ENCODE measurements at regions of chr1 and their contacts with region 1.

Region 1: DNA sequence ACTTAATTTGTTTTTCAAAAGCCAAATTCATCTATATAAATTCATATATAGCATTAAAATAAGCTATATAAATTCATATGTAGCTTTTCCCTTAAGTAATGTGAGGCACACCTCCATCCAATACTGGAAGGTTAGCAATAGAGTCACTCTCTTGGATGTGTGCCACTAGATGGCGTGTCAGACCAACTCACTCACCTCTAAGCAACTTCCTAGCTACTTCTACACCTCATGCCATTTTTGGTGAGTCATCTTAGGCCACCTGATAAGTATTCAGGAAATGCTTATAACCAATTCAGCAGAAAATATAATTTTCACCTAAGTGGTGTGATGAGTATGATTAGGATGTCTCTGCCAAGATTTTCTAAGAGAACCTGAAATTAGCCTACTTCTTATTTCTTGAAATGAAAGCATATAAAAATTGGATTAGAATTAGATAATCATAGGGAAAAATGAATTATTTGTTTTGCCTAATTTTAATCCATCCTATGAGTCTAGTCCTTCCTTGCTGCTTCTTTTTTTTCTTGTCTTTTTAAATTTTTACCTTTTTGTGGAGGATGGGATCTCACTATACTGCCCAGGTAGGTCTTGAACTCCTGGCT is 34.4 kb upstream of the TADA1 start:
- H3K4me3 ChIP-seq: no peak overlapping the region
- H3K27ac ChIP-seq: no peak overlapping the region
- H3K4me1 ChIP-seq: no peaks in the 10 kb centered on the region
- CTCF ChIP-seq: peak; percentile 48; the same call in 1 of the 2 replicates

Region 2: DNA sequence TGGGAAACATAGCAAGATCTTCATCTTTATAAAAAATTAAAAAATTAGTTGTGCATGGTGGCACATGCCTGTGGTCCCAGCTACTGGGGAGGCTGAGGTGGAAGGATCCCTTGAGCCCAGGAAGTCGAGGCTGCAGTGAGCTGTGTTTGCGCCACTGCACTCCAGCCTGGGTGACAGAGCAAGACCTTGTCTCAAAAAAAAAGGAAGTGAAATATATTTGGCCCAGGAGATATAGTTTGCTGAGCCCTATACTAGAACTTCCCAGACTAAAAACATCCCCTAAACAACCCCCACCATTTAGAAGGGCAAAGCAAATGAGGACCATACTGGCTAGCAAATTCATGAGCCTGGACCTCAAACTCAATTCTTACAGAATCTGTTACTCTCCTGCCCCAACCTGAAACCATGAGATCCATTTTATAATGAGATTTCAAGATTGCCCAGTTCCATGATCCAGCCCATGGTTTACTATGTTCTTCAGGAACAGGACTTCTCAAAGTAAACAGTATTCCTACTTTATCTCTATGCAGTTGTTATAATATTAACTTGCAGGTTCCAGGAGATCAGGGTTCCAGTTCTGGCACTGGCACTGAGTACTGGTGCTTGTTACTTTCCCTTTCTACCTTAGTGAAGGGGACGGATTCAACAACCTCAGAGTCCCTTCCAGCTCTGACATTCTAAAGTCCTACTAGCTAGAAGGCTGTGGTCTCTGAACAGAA is 14.5 kb after region 1 on chr1:
- CTCF ChIA-PET with region 1: interaction called, 16 read pairs
- POLR2A ChIA-PET with region 1: no interaction called
- H3K4me3 ChIP-seq: no peak overlapping the region
- H3K27ac ChIP-seq: no peak overlapping the region
- H3K4me1 ChIP-seq: no peaks in the 10 kb centered on the region
- CTCF ChIP-seq: no peak

Region 3: DNA sequence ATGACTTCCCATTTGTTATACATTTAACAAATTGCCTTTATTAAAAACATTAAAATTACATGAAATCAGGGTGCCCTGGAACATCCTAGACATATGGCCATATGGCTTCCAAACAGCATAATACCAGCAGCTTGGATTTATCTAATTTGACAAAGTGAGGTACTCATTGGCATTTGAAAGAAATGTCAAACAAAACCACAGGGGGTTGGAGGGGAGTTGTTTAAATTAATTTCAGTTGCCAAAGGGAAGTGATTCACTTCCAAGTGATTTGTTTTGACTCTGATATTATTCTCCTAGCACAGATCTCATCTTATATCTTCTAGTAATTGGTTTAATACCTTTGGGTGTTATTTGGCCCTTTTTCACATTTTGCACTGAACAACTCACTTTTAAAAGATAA is 285.7 kb after region 1 on chr1:
- CTCF ChIA-PET with region 1: no interaction called
- POLR2A ChIA-PET with region 1: no interaction called
- H3K4me3 ChIP-seq: no peak overlapping the region
- H3K27ac ChIP-seq: no peak overlapping the region
- H3K4me1 ChIP-seq: no peaks in the 10 kb centered on the region
- CTCF ChIP-seq: no peak

Region 4: GRCh38 chr1:167371030-167371429 is 460.5 kb after region 1 on chr1:
- CTCF ChIA-PET with region 1: no interaction called
- POLR2A ChIA-PET with region 1: no interaction called
- H3K4me3 ChIP-seq: no peak overlapping the region
- H3K27ac ChIP-seq: no peak overlapping the region
- H3K4me1 ChIP-seq: no peaks in the 10 kb centered on the region
- CTCF ChIP-seq: no peak